H1 (cell line): ENCODE measurements at regions of chr18 and their contacts with region 1.

Region 1: GRCh38 chr18:63979409-63979920 is 9.6 kb downstream of the SERPINB8 start:
- DNase-seq: peak in 1 of 2 experiments; percentile 61
- H3K4me3 ChIP-seq: no peak overlapping the region
- H3K27ac ChIP-seq: no peak overlapping the region
- H3K4me1 ChIP-seq: no peaks in the 10 kb centered on the region
- H3K27me3 ChIP-seq: peaks cover 21 to 52% (median 34%) of the 10 kb centered on the region in 4 experiments
- CTCF ChIP-seq: peak in 2 of 3 experiments; percentile 78 to 87; a peak in 3 of 4 replicates
- EP300 ChIP-seq: no peak
- POLR2A ChIP-seq: no peak
- RAD21 ChIP-seq: peak; percentile 80 to 81

Region 2: GRCh38 chr18:63994783-63995399 is 15.4 kb after region 1 on chr18:
- CTCF ChIA-PET with region 1: interaction called, 36 read pairs
- POLR2A ChIA-PET with region 1: no interaction called
- DNase-seq: peak; percentile 29 to 77
- H3K4me3 ChIP-seq: no peak overlapping the region
- H3K27ac ChIP-seq: no peak overlapping the region
- H3K4me1 ChIP-seq: no peaks in the 10 kb centered on the region
- H3K27me3 ChIP-seq: no peaks in the 10 kb centered on the region
- CTCF ChIP-seq: peak; percentile 49 to 88 (median 73)
- EP300 ChIP-seq: no peak
- POLR2A ChIP-seq: no peak
- RAD21 ChIP-seq: peak; percentile 75 to 76

Region 3: GRCh38 chr18:64134044-64134747 is 154.7 kb after region 1 on chr18:
- CTCF ChIA-PET with region 1: no interaction called
- POLR2A ChIA-PET with region 1: no interaction called
- DNase-seq: peak in 1 of 2 experiments; percentile 39
- H3K4me3 ChIP-seq: peak overlapping the region in 1 of 4 experiments; percentile 17; a peak in 1 of 8 replicates
- H3K27ac ChIP-seq: 0 out of 2 replicates have a peak overlapping the region, but pooled peaks have one; percentile 14
- H3K4me1 ChIP-seq: peaks cover 0 to 11% (median 7%) of the 10 kb centered on the region in 4 experiments; a peak in 5 of 7 replicates
- H3K27me3 ChIP-seq: no peaks in the 10 kb centered on the region
- CTCF ChIP-seq: no peak
- EP300 ChIP-seq: peak in 1 of 2 experiments; percentile 11; a peak in 1 of 3 replicates
- POLR2A ChIP-seq: no peak
- RAD21 ChIP-seq: no peak